Common myeloid progenitor, CD34-positive (primary cell): ENCODE measurements at regions of chr19 and their contacts with region 1.

Region 1: GRCh38 chr19:50461066-50461875 is 15.0 kb upstream of the EMC10 start:
- DNase-seq: peak; percentile 72 to 77 (median 72)
- H3K4me3 ChIP-seq: no peak overlapping the region
- H3K27ac ChIP-seq: no peak overlapping the region
- H3K4me1 ChIP-seq: no peaks in the 10 kb centered on the region
- H3K27me3 ChIP-seq: peaks cover 0 to 30% (median 6%) of the 10 kb centered on the region in 5 experiments

Region 2: GRCh38 chr19:50341091-50341564 is 120.1 kb before region 1 on chr19:
- CTCF ChIA-PET with region 1: no interaction called
- POLR2A ChIA-PET with region 1: no interaction called
- DNase-seq: no peak
- H3K4me3 ChIP-seq: no peak overlapping the region
- H3K27ac ChIP-seq: no peak overlapping the region
- H3K4me1 ChIP-seq: no peaks in the 10 kb centered on the region
- H3K27me3 ChIP-seq: no peaks in the 10 kb centered on the region

Region 3: DNA sequence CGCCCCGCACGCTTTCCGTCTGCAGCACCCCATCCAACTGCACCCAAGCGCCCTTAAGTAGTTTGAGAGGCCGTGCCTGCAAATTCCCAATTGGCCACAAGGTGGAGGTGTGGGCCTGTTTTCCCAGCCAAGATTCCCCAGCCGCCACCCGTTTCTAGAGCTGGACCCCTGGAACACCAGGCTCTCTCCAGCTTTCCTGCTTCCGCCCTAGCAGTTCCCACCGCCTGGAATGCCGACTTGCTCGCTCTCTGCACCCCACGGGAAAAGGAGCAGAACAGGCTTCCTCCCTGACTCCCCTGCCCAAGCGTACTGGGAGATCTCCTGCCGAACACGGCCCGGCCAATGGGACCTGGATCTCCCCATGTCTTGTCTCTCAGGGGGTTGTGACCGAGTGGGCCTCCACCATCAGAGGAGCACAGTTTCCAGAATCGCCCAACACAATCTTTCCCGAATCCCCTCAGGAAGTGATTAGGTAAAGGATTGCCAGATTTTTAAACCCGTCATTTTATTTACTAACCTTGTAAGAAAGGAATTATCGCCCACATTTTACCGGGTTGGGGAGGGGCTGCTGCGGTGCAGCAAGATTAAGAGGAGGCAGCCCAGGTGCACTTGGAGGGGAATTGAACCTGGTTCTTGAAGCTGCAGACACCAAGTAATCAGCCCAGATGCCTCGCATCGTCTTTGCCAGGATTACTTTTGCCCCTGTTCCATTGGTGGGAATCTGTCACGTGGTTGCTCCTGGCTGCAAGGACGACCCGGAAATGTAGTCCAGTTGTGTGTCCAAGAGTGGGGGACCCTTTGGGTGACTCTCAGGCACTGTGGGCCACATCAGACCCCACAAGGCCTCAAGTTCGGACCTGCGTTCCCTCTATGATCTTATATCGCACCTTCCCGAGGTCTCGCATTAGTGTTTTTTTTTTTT is 92.4 kb before region 1 on chr19:
- CTCF ChIA-PET with region 1: interaction called, 25 read pairs
- POLR2A ChIA-PET with region 1: no interaction called
- DNase-seq: peak; percentile 85 to 88 (median 86)
- H3K4me3 ChIP-seq: peak overlapping the region; percentile 48 to 99 (median 81)
- H3K27ac ChIP-seq: peak overlapping the region; percentile 8 to 68
- H3K4me1 ChIP-seq: peaks cover 0 to 14% (median 9%) of the 10 kb centered on the region in 4 experiments
- H3K27me3 ChIP-seq: no peaks in the 10 kb centered on the region